ENCODE measurements at regions of chr7 and their contacts with region 1.

Region 1: GRCh38 chr7:26667500-26668133 is 196.8 kb downstream of the SKAP2 start:
- DNase-seq: peak; percentile 86 to 97
- H3K4me3 ChIP-seq: no peak overlapping the region
- H3K4me1 ChIP-seq: peaks cover 5% of the 10 kb centered on the region; the same call in 1 of the 2 replicates
- H3K27me3 ChIP-seq: no peaks in the 10 kb centered on the region

Region 2: DNA sequence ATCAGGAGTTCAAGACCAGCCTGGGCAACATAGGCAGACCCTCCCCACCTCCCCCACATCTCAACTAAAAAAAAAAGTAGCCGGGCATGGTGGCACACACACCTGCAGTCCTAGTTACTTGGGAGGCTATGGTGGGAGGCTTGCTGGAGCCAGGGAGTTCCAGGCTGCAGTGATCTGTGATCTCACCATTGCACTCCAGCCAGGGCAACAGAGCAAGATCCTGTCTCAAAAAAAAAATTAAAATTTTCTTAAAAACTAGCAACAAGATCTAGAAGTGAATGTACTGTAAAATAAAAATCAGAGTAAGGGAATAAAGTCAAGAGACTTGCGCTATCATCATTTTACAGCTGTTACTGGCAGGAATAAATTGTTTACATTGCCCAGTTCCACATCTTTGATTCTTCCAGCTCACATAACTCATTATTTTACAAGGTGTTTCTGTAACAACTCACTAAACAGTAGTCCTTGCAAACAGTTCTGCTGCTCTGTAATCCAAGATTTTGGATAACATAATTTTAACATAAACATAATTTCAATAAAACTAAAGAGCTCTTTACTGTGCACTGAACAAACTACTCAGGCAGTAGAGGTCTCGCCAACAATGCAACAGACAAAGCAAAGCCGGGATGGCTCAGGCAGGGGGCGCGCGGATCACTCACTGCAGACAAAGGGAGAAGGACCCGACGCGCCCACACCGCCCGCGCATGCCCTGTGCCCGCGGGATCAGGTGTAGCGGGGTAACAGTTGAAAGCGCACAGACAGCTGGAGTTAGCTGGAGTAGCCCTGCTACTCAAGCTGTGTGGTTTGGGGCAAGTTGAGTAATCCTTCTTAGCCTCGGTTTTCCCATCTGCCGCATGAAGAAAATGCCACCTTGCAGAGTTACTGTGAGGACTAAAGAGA is 588.9 kb before region 1 on chr7:
- in situ Hi-C with region 1: loop called (anchors 25 kb)
- DNase-seq: peak; percentile 62 to 86
- H3K4me3 ChIP-seq: no peak overlapping the region
- H3K4me1 ChIP-seq: peaks cover 25% of the 10 kb centered on the region
- H3K27me3 ChIP-seq: no peaks in the 10 kb centered on the region; the same call in 1 of the 2 replicates

Region 3: GRCh38 chr7:26365077-26365900 is 302.3 kb before region 1 on chr7:
- in situ Hi-C with region 1: loop called (anchors 5 kb)
- DNase-seq: peak; percentile 70 to 76
- H3K4me3 ChIP-seq: no peak overlapping the region
- H3K4me1 ChIP-seq: no peaks in the 10 kb centered on the region; the same call in 1 of the 2 replicates
- H3K27me3 ChIP-seq: no peaks in the 10 kb centered on the region

Region 4: DNA sequence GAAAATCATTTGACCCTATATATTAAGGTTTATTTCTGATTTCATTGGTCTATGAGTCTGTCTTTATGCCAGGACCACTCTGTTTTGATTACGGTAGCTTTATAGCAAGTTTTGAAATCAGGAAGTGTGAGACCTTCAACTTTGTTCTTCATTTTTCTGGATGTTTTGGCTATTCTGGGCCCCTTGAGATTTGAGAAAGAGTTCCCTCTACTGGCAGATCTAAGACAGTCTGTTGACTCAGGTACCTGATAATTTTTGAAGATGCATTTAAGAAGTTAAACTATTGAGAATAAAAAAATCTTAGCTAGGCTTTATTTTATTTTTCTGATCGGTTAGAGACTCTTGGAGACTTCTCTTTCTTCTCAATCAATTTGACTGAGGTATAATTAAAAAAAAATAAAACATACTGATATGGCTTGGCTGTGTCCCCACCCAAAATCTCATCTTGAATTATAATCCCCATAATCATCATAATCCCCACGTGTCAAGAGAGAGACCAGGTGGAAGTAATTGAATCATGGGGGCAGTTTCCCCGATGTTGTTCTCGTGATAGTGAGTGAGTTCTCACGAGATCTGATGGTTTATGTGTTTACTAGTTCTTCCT is 166.8 kb before region 1 on chr7:
- in situ Hi-C with region 1: loop called (anchors 10 kb)
- DNase-seq: peak in 1 of 2 experiments; percentile 31
- H3K4me3 ChIP-seq: no peak overlapping the region
- H3K4me1 ChIP-seq: no peaks in the 10 kb centered on the region
- H3K27me3 ChIP-seq: peaks cover 11% of the 10 kb centered on the region

Region 5: DNA sequence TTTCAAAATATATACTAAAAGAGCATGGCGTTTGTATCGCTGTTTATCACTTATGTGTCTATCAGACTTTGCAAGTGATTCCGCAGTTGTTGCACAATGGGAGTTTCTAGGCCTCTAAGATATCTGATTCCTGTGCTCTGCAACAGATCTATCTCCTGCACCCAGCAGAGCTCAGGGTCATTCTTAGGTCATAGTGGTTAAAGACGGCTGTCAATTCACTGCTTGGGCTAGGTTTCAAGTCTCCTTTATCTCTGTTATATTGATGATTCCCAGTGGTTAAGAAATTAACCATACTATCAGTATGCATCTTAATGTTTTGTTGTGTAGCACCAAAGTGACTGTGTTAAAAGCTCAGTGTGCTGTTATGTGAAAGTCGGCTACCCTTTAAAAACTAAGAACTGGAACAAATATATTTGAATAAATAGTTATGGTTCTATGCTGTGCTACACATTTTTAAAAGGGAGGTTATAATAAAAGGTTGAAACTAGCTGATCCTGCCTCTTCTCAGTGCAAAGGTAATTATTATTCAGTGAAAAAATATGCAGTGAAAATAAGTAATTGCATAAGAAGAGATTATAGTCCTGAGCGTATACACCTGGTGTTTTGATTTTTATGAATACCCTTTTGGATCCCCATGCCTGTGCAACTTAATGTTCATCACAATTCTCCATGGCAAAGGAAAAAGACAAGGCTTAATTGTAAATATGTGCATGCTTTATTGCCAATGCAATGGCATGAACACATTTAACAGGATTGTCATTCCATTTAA is 404.2 kb after region 1 on chr7:
- in situ Hi-C with region 1: no loop called
- DNase-seq: no peak
- H3K4me3 ChIP-seq: no peak overlapping the region
- H3K4me1 ChIP-seq: no peaks in the 10 kb centered on the region
- H3K27me3 ChIP-seq: no peaks in the 10 kb centered on the region